Right ventricle myocardium inferior (tissue), 1 donor: ENCODE measurements at regions of chr6 and their contacts with region 1.

Region 1: GRCh38 chr6:3742426-3743344 is 8.8 kb downstream of the PXDC1 start:
- DNase-seq: peak; percentile 94
- ATAC-seq: peak; percentile 72

Region 2: GRCh38 chr6:3561725-3562124 is 181.0 kb before region 1 on chr6:
- intact Hi-C with region 1: no loop called
- DNase-seq: no peak
- ATAC-seq: no peak

Region 3: DNA sequence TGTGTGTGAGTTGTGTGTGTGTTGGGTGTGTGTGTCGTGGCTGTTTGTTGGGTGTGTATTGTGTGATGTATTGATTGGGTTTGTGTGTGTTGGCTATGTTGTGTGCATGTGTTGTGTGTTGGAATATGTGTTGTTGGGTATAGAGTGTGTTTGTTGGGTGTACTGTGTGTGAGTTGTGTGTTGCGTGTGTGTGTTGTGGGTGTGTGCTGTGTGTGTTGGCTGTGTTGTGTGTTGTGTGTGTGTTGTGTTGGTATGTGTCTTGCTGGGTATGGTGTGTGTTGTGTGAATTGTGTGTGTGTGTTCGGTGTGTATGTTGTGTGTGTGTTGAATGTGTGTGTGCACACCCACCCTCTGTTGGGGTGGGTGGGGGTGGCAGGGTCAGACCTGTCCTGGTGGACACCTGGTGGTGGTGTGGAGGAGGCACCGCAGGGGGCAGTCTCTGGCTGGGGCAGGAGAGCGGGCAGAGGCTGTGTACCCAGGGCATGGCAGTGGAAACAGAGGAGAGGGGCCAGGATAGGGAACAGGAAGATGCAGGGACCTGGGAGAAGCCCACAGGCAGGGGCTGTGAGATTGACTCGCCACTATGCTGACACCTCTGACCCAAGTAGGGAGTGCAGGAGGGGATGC is 34.3 kb after region 1 on chr6:
- intact Hi-C with region 1: no loop called
- DNase-seq: no peak
- ATAC-seq: no peak

Region 4: DNA sequence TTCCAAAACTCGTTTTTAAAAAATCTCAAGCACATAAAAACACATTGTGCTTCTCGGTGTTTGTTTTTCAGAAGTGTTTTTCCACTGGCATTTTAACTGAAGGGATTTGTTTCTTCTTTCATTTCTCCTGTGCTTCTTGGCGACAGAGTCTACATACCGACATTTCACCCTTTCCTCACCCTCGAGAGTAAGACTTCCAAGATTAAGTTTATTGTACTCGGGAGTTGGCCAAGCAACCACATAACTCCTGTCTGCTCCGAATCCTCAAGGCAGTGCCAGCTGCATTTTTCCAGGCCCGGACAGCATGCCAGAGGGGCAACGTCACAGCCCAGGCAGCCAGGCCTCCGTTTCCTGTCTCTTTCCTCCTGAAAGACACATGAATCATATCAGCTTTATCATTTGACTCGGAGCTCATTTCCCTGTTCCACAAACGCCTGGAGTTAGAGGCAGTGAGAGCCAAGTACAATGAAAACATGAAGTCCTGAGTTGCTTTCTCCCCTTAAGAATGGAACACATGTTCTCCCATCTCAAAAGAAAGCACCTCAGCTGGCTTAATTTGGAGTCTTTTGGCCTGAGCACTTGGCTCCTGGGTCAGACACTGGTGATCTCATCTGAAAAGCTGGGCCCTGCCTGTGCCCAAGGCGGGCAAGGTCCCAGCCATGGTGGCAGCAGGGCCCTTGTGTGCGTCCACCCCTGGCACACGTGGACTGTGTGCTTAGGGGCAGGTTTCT is 83.3 kb after region 1 on chr6:
- intact Hi-C with region 1: loop called (anchors 2 kb)
- DNase-seq: peak; percentile 87
- ATAC-seq: peak; percentile 88

Region 5: GRCh38 chr6:3848925-3849605 is 106.4 kb after region 1 on chr6 and contains the start of gene FAM50B:
- intact Hi-C with region 1: loop called (anchors 1 kb)
- DNase-seq: peak; percentile 94
- ATAC-seq: peak; percentile 98
- total RNA-seq, gene FAM50B: 26.5 TPM

Region 6: DNA sequence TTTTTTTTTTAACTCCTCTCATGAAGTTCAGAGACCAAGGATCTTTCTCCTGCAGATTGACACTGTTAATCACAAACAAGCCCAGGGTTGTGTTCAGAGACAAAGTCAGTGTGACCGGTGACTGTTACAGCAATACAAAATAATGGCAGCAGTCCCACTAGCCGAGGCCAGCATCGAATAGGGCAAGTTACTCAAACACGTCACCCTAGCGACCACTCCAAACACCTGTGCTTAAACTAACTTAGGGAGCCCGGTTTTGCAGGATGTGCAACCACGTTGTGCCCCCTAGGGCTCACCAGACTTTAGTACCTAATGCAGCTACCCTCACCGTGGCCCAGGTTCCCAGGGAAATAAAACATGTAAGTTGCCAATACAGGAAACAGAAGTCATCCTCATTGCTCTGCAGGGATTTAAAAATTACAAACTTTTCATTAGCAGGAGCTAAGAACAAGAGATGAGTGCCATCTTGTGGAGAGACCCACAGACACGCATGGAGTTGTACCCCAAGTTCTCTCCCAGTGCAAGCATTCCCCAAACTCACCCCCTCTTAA is 144.5 kb after region 1 on chr6:
- intact Hi-C with region 1: loop called (anchors 1 kb)
- DNase-seq: no peak
- ATAC-seq: peak; percentile 3

Region 7: GRCh38 chr6:3929281-3929798 is 186.7 kb after region 1 on chr6:
- intact Hi-C with region 1: loop called (anchors 1 kb)
- DNase-seq: no peak
- ATAC-seq: no peak

Region 8: GRCh38 chr6:3990692-3991501 is 248.2 kb after region 1 on chr6:
- intact Hi-C with region 1: loop called (anchors 2 kb)
- DNase-seq: peak; percentile 88
- ATAC-seq: peak; percentile 93